HCT116 (cell line): ENCODE measurements at regions of chr19 and their contacts with region 1.

Region 1: DNA sequence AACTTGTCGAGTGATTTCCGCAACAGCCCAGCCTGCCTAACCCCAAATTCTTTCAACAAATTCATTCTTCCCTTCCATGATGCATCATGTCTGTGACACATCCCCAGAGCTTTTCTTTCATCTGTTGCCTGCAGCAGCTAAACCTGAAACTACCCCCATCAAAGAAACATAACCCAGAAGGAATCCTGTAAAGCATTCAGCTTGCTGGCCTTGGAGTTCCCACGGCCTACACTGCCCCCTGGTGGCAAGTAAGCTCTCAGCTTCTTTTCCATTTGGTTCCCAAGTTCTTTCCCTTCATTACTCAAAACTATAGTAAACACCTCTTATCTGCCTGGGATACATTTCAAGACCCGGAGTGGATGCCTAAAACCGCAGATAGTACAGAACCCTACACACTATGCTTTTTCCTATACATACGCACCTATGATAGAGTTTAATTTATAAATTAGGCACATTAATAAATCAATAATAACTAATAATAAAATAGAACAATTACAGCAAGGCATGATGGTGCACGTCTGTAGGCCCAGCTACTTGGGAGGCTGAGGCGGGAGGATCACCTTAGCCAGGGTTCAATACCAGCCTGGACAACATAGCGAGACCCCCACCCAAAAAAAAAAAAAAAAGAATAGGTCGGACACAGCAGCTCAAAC is 7.4 kb downstream of the ETHE1 start:
- DNase-seq: peak; percentile 74
- ATAC-seq: peak; percentile 76
- H3K4me3 ChIP-seq: no peak overlapping the region
- H3K27ac ChIP-seq: no peak overlapping the region
- H3K4me1 ChIP-seq: peaks cover 19 to 30% of the 10 kb centered on the region in 2 experiments
- H3K27me3 ChIP-seq: no peaks in the 10 kb centered on the region
- CTCF ChIP-seq: peak; percentile 88 to 93 (median 91)
- POLR2A ChIP-seq: no peak
- RAD21 ChIP-seq: peak; percentile 93

Region 2: GRCh38 chr19:43229315-43229714 is 290.2 kb before region 1 on chr19:
- CTCF ChIA-PET with region 1: interaction called, 4 read pairs
- POLR2A ChIA-PET with region 1: no interaction called
- RAD21 ChIA-PET with region 1: no interaction called
- intact Hi-C with region 1: loop called (anchors 2 kb)
- DNase-seq: peak; percentile 56
- ATAC-seq: peak; percentile 98
- H3K4me3 ChIP-seq: no peak overlapping the region
- H3K27ac ChIP-seq: no peak overlapping the region
- H3K4me1 ChIP-seq: peaks cover 5 to 7% of the 10 kb centered on the region in 2 experiments; a peak in 1 of 4 replicates
- H3K27me3 ChIP-seq: no peaks in the 10 kb centered on the region
- CTCF ChIP-seq: peak; percentile 67 to 87 (median 85)
- POLR2A ChIP-seq: no peak
- RAD21 ChIP-seq: peak; percentile 92

Region 3: GRCh38 chr19:43425567-43426392 is 93.8 kb before region 1 on chr19:
- CTCF ChIA-PET with region 1: interaction called, 14 read pairs
- POLR2A ChIA-PET with region 1: no interaction called
- RAD21 ChIA-PET with region 1: no interaction called
- intact Hi-C with region 1: no loop called
- DNase-seq: peak; percentile 18
- ATAC-seq: peak; percentile 86
- H3K4me3 ChIP-seq: 0 out of 4 replicates have a peak overlapping the region, but pooled peaks of 1 of the 2 experiments have one; percentile 9
- H3K27ac ChIP-seq: no peak overlapping the region
- H3K4me1 ChIP-seq: peaks cover 7 to 17% of the 10 kb centered on the region in 2 experiments
- H3K27me3 ChIP-seq: no peaks in the 10 kb centered on the region
- CTCF ChIP-seq: peak; percentile 30 to 69 (median 57); a peak in 5 of 6 replicates
- POLR2A ChIP-seq: no peak
- RAD21 ChIP-seq: peak; percentile 57; the same call in 1 of the 2 replicates

Region 4: GRCh38 chr19:43433358-43433673 is 86.2 kb before region 1 on chr19:
- CTCF ChIA-PET with region 1: interaction called, 22 read pairs
- POLR2A ChIA-PET with region 1: interaction called, 4 read pairs
- RAD21 ChIA-PET with region 1: interaction called, 3 to 5 read pairs
- intact Hi-C with region 1: loop called (anchors 1 kb)
- DNase-seq: no peak
- ATAC-seq: no peak
- H3K4me3 ChIP-seq: no peak overlapping the region
- H3K27ac ChIP-seq: no peak overlapping the region
- H3K4me1 ChIP-seq: peaks cover 0 to 18% of the 10 kb centered on the region in 2 experiments; a peak in 2 of 4 replicates
- H3K27me3 ChIP-seq: no peaks in the 10 kb centered on the region
- CTCF ChIP-seq: no peak
- POLR2A ChIP-seq: no peak
- RAD21 ChIP-seq: no peak

Region 5: DNA sequence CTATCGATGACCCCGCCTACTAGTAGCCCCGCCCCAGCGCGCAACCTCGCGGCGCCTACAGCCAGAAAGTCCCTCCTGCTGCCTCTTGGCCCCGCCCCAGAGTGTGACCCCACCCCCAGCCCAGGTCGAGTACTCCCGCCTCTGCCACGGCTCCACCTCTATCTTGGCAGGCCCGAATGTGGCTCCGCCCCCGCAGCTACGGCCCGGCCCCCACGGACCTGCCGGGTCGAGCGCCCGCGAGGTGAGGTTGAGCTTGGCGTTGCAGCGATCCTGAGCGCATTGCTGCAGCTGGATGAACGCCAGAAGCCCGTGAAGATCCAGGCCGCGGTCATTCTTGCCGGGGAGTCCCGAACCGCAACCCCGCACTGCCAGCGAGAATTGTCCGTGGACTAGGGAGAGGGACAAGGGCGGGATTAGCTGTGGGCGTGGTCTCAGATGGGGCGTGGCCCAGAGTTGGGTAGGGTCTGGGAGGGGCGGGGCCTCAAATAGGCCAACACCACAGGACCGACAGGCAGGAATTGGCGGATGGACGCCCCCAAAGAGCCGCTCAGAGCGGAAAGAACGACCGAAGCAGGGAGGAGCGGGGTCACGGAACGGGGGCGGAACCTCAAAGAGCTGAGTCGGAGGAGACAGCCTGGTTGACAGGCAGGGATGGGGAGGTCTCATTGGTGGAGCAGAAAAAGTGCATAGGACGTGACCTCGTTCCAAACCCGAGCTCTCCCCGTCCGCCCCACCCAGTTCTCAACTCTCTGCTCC is 56.0 kb before region 1 on chr19:
- CTCF ChIA-PET with region 1: interaction called, 19 read pairs
- POLR2A ChIA-PET with region 1: no interaction called
- RAD21 ChIA-PET with region 1: interaction called in 1 of 2 experiments, 3 read pairs
- intact Hi-C with region 1: no loop called
- DNase-seq: peak; percentile 90
- ATAC-seq: peak; percentile 87
- H3K4me3 ChIP-seq: peak overlapping the region; percentile 60 to 73
- H3K27ac ChIP-seq: peak overlapping the region; percentile 26
- H3K4me1 ChIP-seq: peaks cover 22 to 54% of the 10 kb centered on the region in 2 experiments
- H3K27me3 ChIP-seq: no peaks in the 10 kb centered on the region
- CTCF ChIP-seq: no peak
- POLR2A ChIP-seq: no peak
- RAD21 ChIP-seq: no peak